A673 (cell line): ENCODE measurements at regions of chr2 and their contacts with region 1.

Region 1: DNA sequence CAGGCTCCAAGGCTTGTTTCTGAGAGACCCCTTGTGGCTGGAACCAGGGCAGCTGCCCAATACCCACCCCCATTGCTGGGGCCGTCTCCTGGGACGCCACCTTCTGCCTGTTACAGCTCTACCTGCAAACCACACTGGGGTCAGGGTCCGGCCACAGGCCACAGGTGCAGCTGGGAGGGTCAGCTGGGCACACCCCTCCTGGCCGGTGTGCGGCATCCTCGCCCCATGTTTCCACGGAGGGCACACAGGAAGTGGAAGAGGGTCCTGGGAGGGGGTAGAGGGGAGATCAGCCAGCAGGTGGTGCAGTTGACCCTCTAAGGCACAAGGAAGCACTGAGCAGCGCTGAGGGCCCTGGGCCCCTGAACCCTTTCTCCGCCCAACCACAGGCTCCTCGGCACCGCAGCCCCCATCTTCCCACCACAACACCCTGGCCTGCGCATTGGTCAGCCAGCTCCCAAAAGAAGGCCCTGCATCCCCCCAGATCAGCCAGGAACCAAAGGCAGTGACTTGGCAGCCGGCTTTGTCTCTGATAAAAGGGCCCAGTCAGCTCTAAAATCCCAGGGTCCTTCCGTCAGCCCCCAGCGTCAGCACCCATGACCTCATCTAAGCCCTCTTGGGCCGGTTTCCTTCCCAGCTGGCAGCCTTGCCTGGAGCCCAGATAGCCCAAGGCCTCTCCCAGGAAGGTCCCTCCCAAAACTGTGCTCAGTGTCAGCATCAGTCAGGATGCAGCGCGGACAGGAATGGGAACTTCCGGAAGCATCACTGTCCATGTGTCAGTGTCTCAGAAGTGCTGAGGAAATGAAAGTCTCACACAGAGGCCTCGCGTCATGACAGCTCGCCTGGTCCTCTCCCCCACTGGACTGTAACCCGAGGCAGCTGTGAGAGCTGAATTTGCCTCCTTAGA is 1.7 kb downstream of the ERFE start:
- DNase-seq: no peak
- H3K4me3 ChIP-seq: no peak overlapping the region
- H3K27ac ChIP-seq: no peak overlapping the region
- H3K4me1 ChIP-seq: no peaks in the 10 kb centered on the region
- H3K27me3 ChIP-seq: peaks cover 6% of the 10 kb centered on the region
- CTCF ChIP-seq: peak; percentile 41

Region 2: GRCh38 chr2:237465515-237466218 is 694.8 kb before region 1 on chr2:
- CTCF ChIA-PET with region 1: no interaction called
- POLR2A ChIA-PET with region 1: no interaction called
- intact Hi-C with region 1: no loop called
- DNase-seq: no peak
- H3K4me3 ChIP-seq: no peak overlapping the region
- H3K27ac ChIP-seq: no peak overlapping the region
- H3K4me1 ChIP-seq: no peaks in the 10 kb centered on the region
- H3K27me3 ChIP-seq: no peaks in the 10 kb centered on the region
- CTCF ChIP-seq: no peak

Region 3: GRCh38 chr2:238263204-238264071 is 103.0 kb after region 1 on chr2:
- CTCF ChIA-PET with region 1: interaction called, 4 read pairs
- POLR2A ChIA-PET with region 1: no interaction called
- intact Hi-C with region 1: loop called (anchors 5 kb)
- DNase-seq: peak; percentile 80
- H3K4me3 ChIP-seq: no peak overlapping the region
- H3K27ac ChIP-seq: no peak overlapping the region
- H3K4me1 ChIP-seq: no peaks in the 10 kb centered on the region
- H3K27me3 ChIP-seq: no peaks in the 10 kb centered on the region
- CTCF ChIP-seq: peak; percentile 89